Caco-2 (cell line): ENCODE measurements at regions of chr12 and their contacts with region 1.

Region 1: GRCh38 chr12:54017878-54018467 is 9.2 kb downstream of the HOXC8 start:
- DNase-seq: peak; percentile 87
- H3K4me3 ChIP-seq: peak overlapping the region; percentile 58
- H3K4me3 Mint-ChIP-seq: peak overlapping the region; percentile 98
- H3K27ac Mint-ChIP-seq: peak overlapping the region; percentile 83
- H3K4me1 ChIP-seq: peaks cover 30% of the 10 kb centered on the region
- H3K4me1 Mint-ChIP-seq: peaks cover 27% of the 10 kb centered on the region
- H3K27me3 ChIP-seq: no peaks in the 10 kb centered on the region
- H3K27me3 Mint-ChIP-seq: no peaks in the 10 kb centered on the region
- CTCF ChIP-seq: no peak

Region 2: GRCh38 chr12:53984901-53985709 is 32.9 kb before region 1 on chr12 and contains the start of gene HOXC10:
- CTCF ChIA-PET with region 1: interaction called, 11 read pairs
- POLR2A ChIA-PET with region 1: interaction called, 3 read pairs
- intact Hi-C with region 1: no loop called
- DNase-seq: peak; percentile 90 to 92
- H3K4me3 ChIP-seq: peak within 1 kb of the TSS; percentile 52
- H3K4me3 Mint-ChIP-seq: peak within 1 kb of the TSS; percentile 77
- H3K27ac Mint-ChIP-seq: peak within 1 kb of the TSS; percentile 81
- H3K4me1 ChIP-seq: peaks cover 41% of the 10 kb centered on the region
- H3K4me1 Mint-ChIP-seq: peaks cover 29% of the 10 kb centered on the region
- H3K27me3 ChIP-seq: no peaks in the 10 kb centered on the region
- H3K27me3 Mint-ChIP-seq: no peaks in the 10 kb centered on the region
- CTCF ChIP-seq: peak; percentile 77 to 83
- total RNA-seq, gene HOXC10: 4.0 and 4.5 TPM in 2 replicates

Region 3: GRCh38 chr12:54142114-54142475 is 124.1 kb after region 1 on chr12:
- CTCF ChIA-PET with region 1: no interaction called
- POLR2A ChIA-PET with region 1: no interaction called
- intact Hi-C with region 1: no loop called
- DNase-seq: no peak
- H3K4me3 ChIP-seq: no peak overlapping the region
- H3K4me3 Mint-ChIP-seq: peak overlapping the region; percentile 58
- H3K27ac Mint-ChIP-seq: no peak overlapping the region
- H3K4me1 ChIP-seq: peaks cover 39% of the 10 kb centered on the region
- H3K4me1 Mint-ChIP-seq: peaks cover 30% of the 10 kb centered on the region
- H3K27me3 ChIP-seq: no peaks in the 10 kb centered on the region
- H3K27me3 Mint-ChIP-seq: no peaks in the 10 kb centered on the region
- CTCF ChIP-seq: no peak

Region 4: GRCh38 chr12:54191550-54192022 is 173.6 kb after region 1 on chr12:
- CTCF ChIA-PET with region 1: interaction called, 12 read pairs
- POLR2A ChIA-PET with region 1: interaction called, 3 read pairs
- intact Hi-C with region 1: no loop called
- DNase-seq: peak; percentile 86 to 87
- H3K4me3 ChIP-seq: no peak overlapping the region
- H3K4me3 Mint-ChIP-seq: no peak overlapping the region
- H3K27ac Mint-ChIP-seq: no peak overlapping the region
- H3K4me1 ChIP-seq: peaks cover 37% of the 10 kb centered on the region
- H3K4me1 Mint-ChIP-seq: peaks cover 16% of the 10 kb centered on the region
- H3K27me3 ChIP-seq: no peaks in the 10 kb centered on the region
- H3K27me3 Mint-ChIP-seq: no peaks in the 10 kb centered on the region
- CTCF ChIP-seq: peak; percentile 74 to 80

Region 5: DNA sequence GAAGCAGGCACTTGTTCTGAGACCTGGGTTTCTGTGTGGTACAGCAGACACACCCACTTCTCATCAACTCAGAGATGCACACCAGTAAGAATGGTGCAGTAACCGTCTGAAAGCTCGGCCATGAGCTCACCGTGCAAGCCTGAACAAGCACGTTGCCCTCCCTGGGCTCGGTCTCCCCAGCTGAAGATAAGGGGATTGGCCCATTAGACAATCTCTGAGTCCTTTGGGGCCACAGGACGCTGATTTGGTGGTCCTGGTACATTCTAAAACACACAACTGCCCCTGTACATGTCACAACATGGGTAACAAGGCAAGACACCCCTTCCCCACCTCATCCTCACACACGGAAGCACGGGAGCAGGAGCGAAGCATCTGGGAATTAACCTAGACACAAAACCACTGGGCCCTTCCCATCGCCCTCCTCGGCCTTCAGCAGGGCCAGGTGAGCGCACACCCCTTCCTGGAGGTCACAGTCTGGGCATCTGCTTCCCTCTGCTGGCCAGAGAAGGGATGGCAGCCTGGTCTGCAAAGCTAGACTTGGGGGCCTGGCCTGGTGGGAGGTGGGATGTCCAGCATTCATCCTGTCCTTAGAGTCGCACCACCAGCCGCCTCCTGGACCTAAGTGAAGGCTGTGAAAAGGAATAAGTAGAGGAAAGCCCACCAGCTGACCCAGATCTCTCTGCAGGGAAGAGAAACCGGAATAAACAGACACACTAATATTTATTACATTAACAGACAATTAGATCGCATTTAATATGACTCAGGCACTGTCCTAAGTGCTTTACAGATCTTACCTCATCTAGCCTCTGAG is 189.7 kb after region 1 on chr12:
- CTCF ChIA-PET with region 1: interaction called, 14 read pairs
- POLR2A ChIA-PET with region 1: no interaction called
- intact Hi-C with region 1: no loop called
- DNase-seq: peak; percentile 86 to 91
- H3K4me3 ChIP-seq: no peak overlapping the region
- H3K4me3 Mint-ChIP-seq: no peak overlapping the region
- H3K27ac Mint-ChIP-seq: no peak overlapping the region
- H3K4me1 ChIP-seq: peaks cover 7% of the 10 kb centered on the region; the same call in 1 of the 2 replicates
- H3K4me1 Mint-ChIP-seq: peaks cover 7% of the 10 kb centered on the region
- H3K27me3 ChIP-seq: no peaks in the 10 kb centered on the region
- H3K27me3 Mint-ChIP-seq: no peaks in the 10 kb centered on the region
- CTCF ChIP-seq: peak; percentile 92 to 94